ENCODE measurements at regions of chr16 and their contacts with region 1.

Region 1: DNA sequence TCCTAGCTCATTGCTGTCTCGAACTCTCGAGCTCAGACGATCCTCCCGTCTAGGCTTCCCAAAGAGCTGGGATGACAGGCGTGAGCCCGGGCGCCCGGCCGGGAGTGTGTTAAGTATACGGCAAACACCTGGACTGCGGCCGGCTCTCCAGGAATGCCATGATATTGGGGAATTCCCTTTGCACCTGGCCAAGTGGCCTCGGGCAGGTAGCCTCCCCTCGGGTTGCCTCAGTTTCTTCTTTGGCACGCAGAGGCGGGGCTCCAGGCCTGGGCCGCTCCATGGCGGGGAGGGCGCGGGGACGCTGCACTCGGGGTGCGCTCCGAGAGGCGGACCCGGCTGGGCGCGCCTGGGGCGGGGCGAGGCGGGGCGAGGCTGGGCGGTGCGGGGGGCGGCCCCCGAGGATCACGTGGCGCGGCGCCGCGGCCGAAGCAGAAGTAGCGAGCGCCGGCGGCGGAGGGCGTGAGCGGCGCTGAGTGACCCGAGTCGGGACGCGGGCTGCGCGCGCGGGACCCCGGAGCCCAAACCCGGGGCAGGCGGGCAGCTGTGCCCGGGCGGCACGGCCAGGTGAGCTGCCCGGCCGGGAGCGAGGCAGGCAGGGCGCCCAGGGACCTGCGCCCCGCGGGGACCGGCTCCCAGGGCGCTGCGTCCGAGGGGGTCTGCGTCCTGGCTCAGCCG is at the start of gene PLCG2:
- DNase-seq: peak; percentile 92
- CTCF ChIP-seq: no peak

Region 2: GRCh38 chr16:81686391-81687130 is 92.4 kb before region 1 on chr16:
- CTCF ChIA-PET with region 1: no interaction called
- POLR2A ChIA-PET with region 1: no interaction called
- DNase-seq: no peak
- CTCF ChIP-seq: no peak

Region 3: GRCh38 chr16:81752225-81752875 is 26.6 kb before region 1 on chr16:
- CTCF ChIA-PET with region 1: interaction called, 23 read pairs
- POLR2A ChIA-PET with region 1: interaction called, 4 read pairs
- DNase-seq: peak; percentile 84
- CTCF ChIP-seq: peak; percentile 7

Measured in GM10248 (cell line).